CD4-positive, alpha-beta T cell (primary cell): ENCODE measurements at regions of chr15 and their contacts with region 1.

Region 1: DNA sequence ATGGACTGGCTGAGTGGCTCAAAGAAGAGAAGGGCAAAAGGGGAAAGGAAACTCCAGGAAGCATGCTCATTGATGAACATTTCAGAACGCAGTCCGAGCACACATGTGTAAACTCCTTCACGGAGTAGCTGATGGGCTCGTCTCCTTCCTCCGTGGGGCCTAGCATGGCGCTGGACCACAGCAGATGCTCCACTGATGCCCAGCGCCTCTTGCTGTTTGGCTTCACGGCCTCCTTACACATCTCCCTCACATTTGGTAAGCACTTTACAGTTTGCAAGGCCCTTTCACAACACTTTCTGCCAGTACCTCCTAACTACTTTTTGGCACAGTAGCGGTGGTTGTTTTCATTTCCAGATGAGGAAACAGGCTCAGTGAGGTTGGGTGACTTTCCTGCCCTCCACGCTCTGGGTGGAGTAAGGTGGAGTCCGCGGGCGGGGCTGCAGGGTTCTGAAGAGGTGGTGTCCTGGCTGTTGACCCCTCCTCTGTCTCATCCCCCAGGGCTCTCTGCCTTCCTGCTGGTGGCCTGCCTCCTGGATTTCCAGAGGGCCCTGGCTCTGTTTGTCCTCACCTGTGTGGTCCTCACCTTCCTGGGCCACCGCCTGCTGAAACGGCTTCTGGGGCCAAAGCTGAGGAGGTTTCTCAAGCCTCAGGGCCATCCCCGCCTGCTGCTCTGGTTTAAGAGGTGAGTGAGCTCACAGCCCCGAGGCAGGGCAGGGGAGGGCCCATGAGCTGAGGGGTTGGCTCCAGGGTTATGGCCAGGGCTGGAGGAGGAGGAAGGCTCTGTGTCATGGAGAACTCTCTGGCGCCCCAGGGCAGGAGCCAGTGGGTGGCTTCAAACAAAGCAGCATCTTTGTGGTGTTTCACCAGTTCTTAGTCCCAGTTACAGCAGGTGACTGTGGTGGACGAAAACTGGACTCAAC is 10.2 kb downstream of the SLC28A1 start:
- DNase-seq: no peak
- ATAC-seq: no peak
- H3K4me3 ChIP-seq: no peak overlapping the region
- H3K4me3 Mint-ChIP-seq: no peak overlapping the region
- H3K27ac ChIP-seq: no peak overlapping the region
- H3K27ac Mint-ChIP-seq: no peak overlapping the region
- H3K4me1 ChIP-seq: no peaks in the 10 kb centered on the region
- H3K4me1 Mint-ChIP-seq: no peaks in the 10 kb centered on the region
- H3K27me3 ChIP-seq: no peaks in the 10 kb centered on the region
- H3K27me3 Mint-ChIP-seq: peaks cover 6% of the 10 kb centered on the region
- CTCF ChIP-seq: no peak

Region 2: GRCh38 chr15:84833447-84834228 is 61.1 kb before region 1 on chr15:
- CTCF ChIA-PET with region 1: no interaction called
- POLR2A ChIA-PET with region 1: no interaction called
- intact Hi-C with region 1: loop called in 1 of 2 experiments (anchors 5 kb)
- DNase-seq: no peak
- ATAC-seq: no peak
- H3K4me3 ChIP-seq: no peak overlapping the region
- H3K4me3 Mint-ChIP-seq: no peak overlapping the region
- H3K27ac ChIP-seq: no peak overlapping the region
- H3K27ac Mint-ChIP-seq: no peak overlapping the region
- H3K4me1 ChIP-seq: no peaks in the 10 kb centered on the region
- H3K4me1 Mint-ChIP-seq: no peaks in the 10 kb centered on the region
- H3K27me3 ChIP-seq: no peaks in the 10 kb centered on the region
- H3K27me3 Mint-ChIP-seq: no peaks in the 10 kb centered on the region
- CTCF ChIP-seq: no peak

Region 3: DNA sequence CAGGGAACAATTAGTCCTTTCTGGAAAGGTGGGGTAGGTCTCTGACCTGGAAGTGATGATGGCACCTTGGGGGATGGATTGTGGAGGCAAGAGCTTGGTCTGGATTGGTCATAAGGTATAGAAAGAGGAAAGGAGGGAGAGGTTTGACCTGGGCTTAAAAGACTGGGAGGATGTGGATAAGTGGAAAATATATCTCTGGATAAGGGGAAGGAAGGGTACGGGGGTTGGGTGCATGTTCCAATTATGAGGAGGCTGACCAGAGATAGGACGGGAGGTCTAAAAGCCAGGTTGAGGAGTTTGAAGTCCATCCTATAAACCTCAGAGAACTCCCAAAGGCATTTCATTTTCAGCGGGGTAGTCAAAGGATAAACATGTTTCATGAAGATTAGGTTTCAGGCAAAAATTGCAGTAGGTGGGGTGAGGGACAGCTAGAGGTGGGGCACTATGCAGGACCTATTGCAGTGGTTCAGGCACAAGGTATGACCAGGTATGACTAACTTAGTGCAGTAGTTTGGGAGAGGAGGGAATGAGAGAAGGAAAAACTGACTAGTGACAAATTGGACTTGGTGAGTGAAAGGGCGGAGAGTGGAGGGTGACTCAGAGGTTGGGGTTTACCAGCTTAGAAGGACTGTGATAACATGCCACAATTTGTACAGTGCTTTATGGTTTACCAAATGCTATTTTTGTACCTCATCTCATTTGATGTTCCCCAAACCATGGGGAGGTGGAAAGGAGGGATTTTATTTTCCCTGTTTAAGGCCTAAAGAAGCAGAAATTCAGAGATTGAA is 97.6 kb after region 1 on chr15:
- CTCF ChIA-PET with region 1: no interaction called
- POLR2A ChIA-PET with region 1: no interaction called
- intact Hi-C with region 1: no loop called
- DNase-seq: peak in 4 of 14 experiments; percentile 15 to 48 (median 31)
- ATAC-seq: no peak
- H3K4me3 ChIP-seq: no peak overlapping the region
- H3K4me3 Mint-ChIP-seq: no peak overlapping the region
- H3K27ac ChIP-seq: no peak overlapping the region
- H3K27ac Mint-ChIP-seq: no peak overlapping the region
- H3K4me1 ChIP-seq: peaks cover 29% of the 10 kb centered on the region
- H3K4me1 Mint-ChIP-seq: peaks cover 60% of the 10 kb centered on the region
- H3K27me3 ChIP-seq: no peaks in the 10 kb centered on the region
- H3K27me3 Mint-ChIP-seq: no peaks in the 10 kb centered on the region
- CTCF ChIP-seq: no peak